ENCODE measurements at regions of chr9 and their contacts with region 1.

Region 1: GRCh38 chr9:68584189-68585033 is 43.7 kb upstream of the TMEM252 start:
- DNase-seq: peak; percentile 90

Region 2: GRCh38 chr9:68595868-68596267 is 11.5 kb after region 1 on chr9:
- intact Hi-C with region 1: no loop called
- DNase-seq: no peak

Region 3: DNA sequence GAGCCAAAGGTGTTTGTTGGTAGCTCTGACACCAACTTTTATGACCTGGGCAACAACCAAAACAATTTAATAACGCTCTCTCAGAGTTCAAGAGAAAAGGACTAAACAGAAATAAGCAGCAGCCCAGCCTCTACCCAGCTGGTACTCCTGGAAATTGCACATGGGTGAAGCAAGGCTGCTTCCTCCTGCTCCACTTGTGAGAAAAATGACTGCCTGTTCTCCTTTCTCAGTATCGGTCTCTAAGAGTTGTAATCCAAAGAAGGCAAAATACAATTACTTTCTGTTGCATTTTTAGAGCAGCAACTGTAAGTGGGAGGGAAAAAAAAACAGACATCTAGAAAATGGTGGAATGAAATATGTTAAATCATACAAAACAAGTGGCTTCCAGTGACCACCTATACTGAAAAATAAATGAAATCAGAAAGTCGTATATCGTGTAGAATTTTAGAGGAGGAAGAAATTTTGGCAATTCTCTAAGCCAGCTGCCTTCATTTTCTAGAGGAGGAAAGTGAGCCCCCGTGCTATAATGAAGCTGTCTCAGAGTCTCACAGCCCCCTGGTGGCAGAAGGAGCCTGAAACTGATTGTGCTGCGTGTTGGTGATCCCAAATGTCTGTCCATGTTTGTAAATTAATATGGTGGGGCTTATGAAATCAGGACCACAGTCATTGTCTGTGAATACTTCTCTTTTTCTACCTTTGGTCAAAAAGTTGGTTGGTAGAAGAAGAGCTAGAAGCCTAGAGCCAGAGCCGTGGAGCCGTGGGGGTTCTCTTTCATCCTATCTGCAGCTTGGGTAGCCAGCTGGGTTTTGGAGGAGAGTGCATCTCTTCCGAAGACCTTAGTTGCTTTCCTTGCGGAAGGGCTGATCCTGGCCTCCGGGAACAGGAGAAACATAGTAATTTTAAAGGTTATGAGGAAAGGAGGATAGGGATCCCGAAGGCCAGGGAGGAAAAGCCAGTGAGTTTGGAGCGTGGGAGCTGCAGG is 260.5 kb after region 1 on chr9:
- intact Hi-C with region 1: loop called in 1 of 2 experiments (anchors 10 kb)
- DNase-seq: no peak

Region 4: GRCh38 chr9:68999393-69000105 is 415.1 kb after region 1 on chr9:
- intact Hi-C with region 1: loop called (anchors 10 kb)
- DNase-seq: no peak

Measured in posterior vena cava (tissue), 2 donors.